ENCODE measurements at regions of chr12 and their contacts with region 1.

Region 1: DNA sequence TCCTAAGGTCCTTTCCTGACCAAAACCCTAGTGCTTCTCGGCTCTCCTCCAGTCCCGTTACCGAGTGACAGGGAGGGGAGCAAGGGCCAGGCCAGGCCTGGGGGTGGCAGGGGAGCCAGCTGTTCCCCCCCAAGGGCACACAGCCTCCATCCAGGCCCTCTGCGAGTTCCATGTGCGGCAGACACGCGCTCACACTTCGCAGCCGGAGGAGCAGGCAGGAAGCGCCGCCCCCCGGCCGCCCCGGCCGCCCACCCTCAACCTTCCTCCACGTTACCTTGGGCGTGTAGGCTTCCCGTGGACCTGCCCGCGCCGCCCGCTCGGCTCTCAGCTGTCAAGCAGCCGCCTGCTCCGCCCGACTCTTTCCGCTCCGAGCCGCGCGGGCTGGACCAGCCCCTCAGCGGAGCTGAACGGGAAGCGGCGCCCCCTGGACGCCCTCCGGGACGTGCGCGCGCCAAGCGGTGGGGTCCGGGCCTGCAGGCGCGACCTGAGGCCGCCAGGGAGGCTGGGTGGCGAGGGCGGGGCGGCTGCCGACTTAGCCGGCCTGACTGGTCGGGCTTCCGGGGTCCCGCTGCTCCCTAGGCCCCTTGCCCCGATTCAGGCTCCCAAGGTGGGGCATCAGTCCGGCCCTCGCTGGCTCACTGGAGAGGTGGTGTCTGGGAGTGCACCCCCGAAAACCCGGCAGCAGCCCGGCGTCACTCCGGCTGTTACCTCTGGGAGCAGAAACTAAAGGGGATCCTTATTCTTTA is at the start of gene CRACR2A:
- DNase-seq: peak; percentile 92
- ATAC-seq: peak; percentile 84
- H3K4me3 Mint-ChIP-seq: peak within 1 kb of the TSS; percentile 86
- H3K27ac Mint-ChIP-seq: peak within 1 kb of the TSS; percentile 96
- H3K4me1 Mint-ChIP-seq: peaks cover 52% of the 10 kb centered on the region
- H3K27me3 Mint-ChIP-seq: no peaks in the 10 kb centered on the region
- total RNA-seq, gene CRACR2A: 19.2 to 22.5 TPM

Region 2: DNA sequence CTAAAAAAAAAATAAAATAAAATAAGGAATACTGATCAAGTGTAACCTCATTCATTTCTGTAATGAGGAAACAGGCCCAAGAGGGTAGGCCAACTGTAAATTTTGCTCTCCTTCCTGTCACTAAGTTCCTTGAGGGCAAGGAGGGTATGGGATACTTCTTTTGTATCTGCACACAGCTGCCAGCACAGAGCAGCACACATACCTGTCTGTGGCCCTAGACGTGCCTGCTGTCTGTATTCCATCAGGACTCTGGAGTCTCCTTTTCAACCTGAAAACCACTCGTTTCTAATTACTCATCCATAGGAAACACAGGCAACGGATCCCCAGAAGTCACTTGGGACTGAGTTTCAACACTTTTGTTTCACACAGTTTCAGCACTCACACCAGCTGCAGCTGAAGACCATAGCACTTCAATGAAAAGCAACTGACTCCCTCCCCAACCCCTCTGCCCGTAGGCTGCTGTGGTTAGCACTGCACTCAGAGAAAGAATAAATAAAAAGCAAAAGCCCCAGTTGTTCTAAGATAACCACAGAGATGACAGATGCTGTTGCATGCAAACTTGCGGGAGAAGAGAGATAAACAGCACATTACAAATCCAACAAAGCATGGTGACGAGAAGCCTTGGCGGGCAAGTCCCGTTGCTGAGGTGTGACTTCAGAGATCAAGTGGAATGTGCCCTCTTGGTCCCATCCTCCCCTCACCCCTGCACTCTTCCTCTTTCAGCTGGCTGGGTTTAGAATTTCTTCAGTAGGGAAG is 24.9 kb before region 1 on chr12:
- CTCF ChIA-PET with region 1: interaction called, 3 read pairs
- POLR2A ChIA-PET with region 1: no interaction called
- intact Hi-C with region 1: loop called (anchors 1 to 2 kb)
- DNase-seq: peak; percentile 72
- ATAC-seq: peak; percentile 87
- H3K4me3 Mint-ChIP-seq: peak overlapping the region; percentile 7
- H3K27ac Mint-ChIP-seq: peak overlapping the region; percentile 73
- H3K4me1 Mint-ChIP-seq: peaks cover 37% of the 10 kb centered on the region
- H3K27me3 Mint-ChIP-seq: no peaks in the 10 kb centered on the region

Region 3: DNA sequence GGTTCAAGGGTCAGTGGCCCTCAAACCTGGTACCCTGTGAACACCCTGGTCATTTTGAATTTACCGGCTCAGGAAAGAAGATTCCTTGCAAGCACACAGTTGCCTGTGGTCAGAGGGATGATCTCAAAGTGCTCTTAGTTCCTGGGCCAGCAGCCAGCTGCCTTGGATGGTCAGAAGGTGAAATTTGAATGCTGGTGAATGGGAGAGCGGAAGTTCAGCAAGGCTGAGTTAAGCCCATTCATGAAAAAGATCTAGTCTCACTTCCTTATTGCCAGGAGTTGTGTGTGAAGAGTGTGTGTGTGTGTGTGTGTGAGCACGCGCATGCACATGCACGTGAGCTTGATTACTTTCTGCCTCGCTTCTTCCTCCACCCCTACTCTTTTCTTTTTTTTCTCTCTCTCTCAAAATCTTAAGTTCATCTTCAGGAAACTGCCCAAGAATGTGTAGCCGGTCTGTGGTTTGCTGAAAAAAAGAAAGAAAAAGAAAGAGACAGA is 365.1 kb after region 1 on chr12:
- CTCF ChIA-PET with region 1: no interaction called
- POLR2A ChIA-PET with region 1: no interaction called
- intact Hi-C with region 1: no loop called
- DNase-seq: no peak
- ATAC-seq: no peak
- H3K4me3 Mint-ChIP-seq: peak overlapping the region; percentile 38
- H3K27ac Mint-ChIP-seq: peak overlapping the region; percentile 86
- H3K4me1 Mint-ChIP-seq: peaks cover 63% of the 10 kb centered on the region
- H3K27me3 Mint-ChIP-seq: peaks cover 3% of the 10 kb centered on the region

Region 4: GRCh38 chr12:4320853-4321701 is 568.2 kb after region 1 on chr12 and contains the start of gene TIGAR:
- CTCF ChIA-PET with region 1: no interaction called
- POLR2A ChIA-PET with region 1: no interaction called
- intact Hi-C with region 1: loop called in 1 of 2 experiments (anchors 1 kb)
- DNase-seq: peak; percentile 96
- ATAC-seq: peak; percentile 99
- H3K4me3 Mint-ChIP-seq: peak within 1 kb of the TSS; percentile 89
- H3K27ac Mint-ChIP-seq: peak within 1 kb of the TSS; percentile 85
- H3K4me1 Mint-ChIP-seq: peaks cover 33% of the 10 kb centered on the region
- H3K27me3 Mint-ChIP-seq: no peaks in the 10 kb centered on the region
- total RNA-seq, gene TIGAR: 7.1 to 8.4 TPM